ENCODE measurements at regions of chr2 and their contacts with region 1.

Region 1: DNA sequence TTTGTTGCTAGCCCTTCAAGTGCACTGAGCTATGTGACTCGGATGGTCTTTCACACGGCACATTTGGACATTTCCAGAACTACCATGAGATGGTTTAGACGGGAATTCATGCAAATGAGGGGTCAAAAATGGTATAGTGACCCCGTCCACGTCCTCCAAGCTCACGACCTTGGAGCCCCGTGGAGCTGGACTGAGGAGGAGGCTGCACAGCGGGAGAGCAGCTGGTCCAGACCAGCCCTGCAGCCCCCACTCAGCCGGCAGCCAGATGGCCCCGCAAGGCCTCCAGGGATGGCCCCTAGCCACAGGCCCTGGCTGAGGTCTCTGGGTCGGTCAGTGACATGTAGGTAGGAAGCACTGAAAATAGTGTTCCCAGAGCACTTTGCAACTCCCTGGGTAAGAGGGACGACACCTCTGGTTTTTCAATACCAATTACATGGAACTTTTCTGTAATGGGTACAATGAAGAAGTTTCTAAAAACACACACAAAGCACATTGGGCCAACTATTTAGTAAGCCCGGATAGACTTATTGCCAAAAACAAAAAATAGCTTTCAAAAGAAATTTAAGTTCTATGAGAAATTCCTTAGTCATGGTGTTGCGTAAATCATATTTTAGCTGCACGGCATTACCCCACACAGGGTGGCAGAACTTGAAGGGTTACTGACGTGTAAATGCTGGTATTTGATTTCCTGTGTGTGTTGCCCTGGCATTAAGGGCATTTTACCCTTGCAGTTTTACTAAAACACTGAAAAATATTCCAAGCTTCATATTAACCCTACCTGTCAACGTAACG is 88.8 kb downstream of the EPAS1 start:
- DNase-seq: no peak
- CTCF ChIP-seq: no peak

Region 2: GRCh38 chr2:45643543-45644542 is 742.1 kb before region 1 on chr2:
- in situ Hi-C with region 1: loop called (anchors 25 kb)
- DNase-seq: peak; percentile 91
- CTCF ChIP-seq: peak; percentile 93

Region 3: DNA sequence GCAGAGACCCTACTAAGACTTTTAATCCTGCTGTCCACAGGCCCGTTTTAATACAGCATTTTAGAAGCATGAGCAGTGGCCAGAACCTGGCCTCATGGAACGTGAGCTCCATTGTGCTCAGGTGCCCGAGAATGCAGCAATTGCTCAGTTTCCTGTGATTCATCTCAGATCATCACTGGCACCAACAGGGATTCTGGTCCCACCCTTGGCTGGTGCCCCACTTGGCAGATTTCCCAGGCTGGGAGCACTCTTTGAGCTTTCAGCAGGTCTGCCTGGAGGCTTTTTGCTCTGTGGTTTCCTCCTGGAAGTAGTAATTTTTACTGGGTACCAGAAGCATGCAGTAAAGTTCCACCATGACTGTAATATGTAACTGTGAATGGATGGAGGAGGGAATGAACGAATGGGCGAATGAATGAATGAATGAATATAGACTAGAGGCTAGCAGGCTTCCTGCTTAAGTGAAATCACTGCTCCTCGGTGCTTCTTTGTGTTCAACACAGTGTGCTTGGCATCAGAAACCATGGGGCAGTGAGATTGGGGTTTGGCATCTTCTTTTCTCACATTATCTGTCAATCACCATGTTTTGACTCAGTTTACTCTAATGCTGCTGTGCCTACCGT is 421.6 kb before region 1 on chr2:
- in situ Hi-C with region 1: no loop called
- DNase-seq: no peak
- CTCF ChIP-seq: no peak

Region 4: DNA sequence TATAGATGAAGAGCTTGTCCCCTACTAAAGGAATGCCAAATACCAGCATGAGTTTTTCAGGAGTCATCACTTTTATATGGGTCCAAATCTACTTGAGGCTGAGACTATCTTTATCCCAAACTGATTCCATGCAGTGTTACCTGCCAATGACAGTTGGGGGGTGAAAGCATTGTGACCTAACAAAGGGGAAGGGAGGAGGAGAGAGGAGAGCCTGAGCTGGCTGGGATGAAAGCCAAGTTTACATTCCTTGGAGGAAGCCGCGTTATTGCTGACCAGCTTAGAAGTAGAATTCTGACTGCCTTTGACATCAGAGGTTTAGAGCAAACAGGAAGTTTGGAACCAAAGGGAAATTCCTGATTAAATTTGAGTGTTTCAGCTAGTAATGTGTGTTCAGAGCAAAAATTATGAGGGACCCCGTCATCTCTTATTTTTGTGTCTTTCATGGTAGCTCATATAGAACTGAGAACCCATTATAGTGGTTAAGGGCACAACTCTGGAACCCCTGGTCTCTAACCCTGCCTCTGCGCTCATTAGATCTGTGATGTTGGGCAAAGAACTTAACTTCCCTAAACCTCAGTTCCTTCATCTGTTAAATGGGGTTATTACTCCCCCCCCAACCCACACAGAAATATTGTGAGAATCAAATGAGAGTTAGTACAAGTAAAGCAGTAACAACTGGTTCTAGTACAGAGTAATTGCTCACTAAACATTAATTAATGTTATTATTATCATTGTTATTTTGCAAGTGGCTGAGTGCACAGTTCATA is 288.1 kb before region 1 on chr2:
- in situ Hi-C with region 1: no loop called
- DNase-seq: no peak
- CTCF ChIP-seq: no peak

Region 5: DNA sequence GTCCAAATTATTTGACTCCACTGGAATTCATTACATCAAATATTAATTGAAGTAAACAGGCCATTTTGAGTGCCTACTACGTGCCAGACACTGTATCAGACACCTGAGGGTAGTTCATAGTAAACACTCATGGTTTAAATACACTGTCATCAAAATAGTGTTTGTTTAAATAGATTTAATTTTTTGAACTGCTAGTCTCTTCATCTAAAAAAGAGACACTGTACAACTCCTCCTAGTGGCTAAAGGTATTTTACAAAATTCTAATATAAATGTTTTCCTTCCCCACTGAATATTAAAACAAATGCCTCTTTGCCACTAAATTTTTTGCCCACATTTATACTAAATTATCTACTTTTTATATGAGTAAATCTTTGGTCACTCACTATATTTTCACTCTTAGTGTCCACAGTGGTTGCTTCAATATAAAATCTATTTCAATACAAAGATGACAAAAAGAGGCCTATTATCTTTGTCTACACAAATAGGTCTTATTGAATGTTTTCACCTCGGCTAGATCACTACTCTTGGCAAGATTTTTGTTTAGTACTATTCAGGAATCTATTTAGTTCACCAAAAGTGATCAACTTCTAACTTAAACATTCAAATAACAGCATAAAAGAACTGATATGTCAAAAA is 215.5 kb after region 1 on chr2:
- in situ Hi-C with region 1: no loop called
- DNase-seq: peak; percentile 27
- CTCF ChIP-seq: peak; percentile 14